Endothelial cell of umbilical vein (primary cell): ENCODE measurements at regions of chr3 and their contacts with region 1.

Region 1: DNA sequence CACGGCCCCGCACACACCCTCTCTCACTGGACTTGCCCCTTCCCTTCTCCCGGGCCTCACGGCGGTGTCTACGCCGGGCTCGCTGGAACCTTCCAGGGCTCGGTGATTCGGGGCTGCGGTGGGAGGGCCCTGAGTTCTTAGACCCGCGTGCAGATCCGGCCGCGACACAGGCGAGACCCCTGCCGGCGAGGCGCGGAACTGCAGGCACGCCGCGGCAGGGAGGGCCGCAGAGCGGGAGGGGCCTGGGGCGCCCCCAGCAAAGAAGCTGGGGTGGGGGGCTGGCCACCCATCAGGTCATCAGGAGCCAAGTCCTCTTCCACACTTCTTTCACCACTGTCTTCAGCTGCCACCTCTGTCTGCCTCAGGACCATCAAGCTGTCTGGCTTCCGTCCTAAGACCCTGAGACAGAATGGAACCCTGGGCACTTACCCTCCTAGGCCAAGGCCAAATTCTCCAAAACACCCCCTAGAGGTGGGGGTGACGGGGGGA is 164.5 kb downstream of the XXYLT1 start:
- DNase-seq: peak; percentile 76
- H3K4me3 ChIP-seq: no peak overlapping the region
- H3K27ac ChIP-seq: peak overlapping the region; percentile 96
- H3K4me1 ChIP-seq: peaks cover 44% of the 10 kb centered on the region
- H3K27me3 ChIP-seq: no peaks in the 10 kb centered on the region
- CTCF ChIP-seq: peak; percentile 97 to 98
- POLR2A ChIP-seq: no peak

Region 2: GRCh38 chr3:194640829-194641228 is 465.6 kb before region 1 on chr3:
- CTCF ChIA-PET with region 1: no interaction called
- POLR2A ChIA-PET with region 1: no interaction called
- dilution Hi-C with region 1: no loop called
- intact Hi-C with region 1: loop called (anchors 1 kb)
- DNase-seq: peak; percentile 79
- H3K4me3 ChIP-seq: peak overlapping the region in 1 of 3 experiments; percentile 14
- H3K27ac ChIP-seq: peak overlapping the region; percentile 91
- H3K4me1 ChIP-seq: peaks cover 35% of the 10 kb centered on the region
- H3K27me3 ChIP-seq: no peaks in the 10 kb centered on the region
- CTCF ChIP-seq: peak; percentile 49 to 61
- POLR2A ChIP-seq: no peak

Region 3: GRCh38 chr3:194691481-194692283 is 414.8 kb before region 1 on chr3:
- CTCF ChIA-PET with region 1: interaction called, 20 read pairs
- POLR2A ChIA-PET with region 1: interaction called, 5 read pairs
- dilution Hi-C with region 1: loop called (anchors 25 kb)
- intact Hi-C with region 1: loop called (anchors 1 kb)
- DNase-seq: peak; percentile 68
- H3K4me3 ChIP-seq: no peak overlapping the region
- H3K27ac ChIP-seq: peak overlapping the region; percentile 39
- H3K4me1 ChIP-seq: peaks cover 19% of the 10 kb centered on the region
- H3K27me3 ChIP-seq: no peaks in the 10 kb centered on the region
- CTCF ChIP-seq: no peak
- POLR2A ChIP-seq: peak; percentile 76

Region 4: DNA sequence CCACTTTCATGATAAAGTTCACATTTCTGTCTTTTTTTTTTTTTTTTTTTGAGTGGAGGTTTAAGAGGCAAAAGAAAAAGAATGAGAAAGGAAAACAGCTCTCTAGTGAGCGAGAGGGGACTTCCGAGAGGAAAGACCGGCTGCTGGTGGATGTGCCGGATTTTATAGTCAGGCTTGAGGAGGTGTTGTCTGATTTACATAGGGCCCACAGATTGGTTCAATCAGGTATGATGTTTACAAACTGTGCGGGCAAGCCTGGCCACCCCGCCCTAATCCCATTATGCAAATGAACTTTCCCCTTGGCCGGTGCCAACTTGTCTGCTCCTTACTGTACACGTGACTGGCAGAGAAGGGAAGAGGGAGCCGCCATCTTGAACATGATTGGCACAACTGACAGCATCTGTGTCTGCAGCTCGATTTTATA is 376.1 kb before region 1 on chr3:
- CTCF ChIA-PET with region 1: no interaction called
- POLR2A ChIA-PET with region 1: no interaction called
- dilution Hi-C with region 1: no loop called
- intact Hi-C with region 1: no loop called
- DNase-seq: peak; percentile 32
- H3K4me3 ChIP-seq: no peak overlapping the region
- H3K27ac ChIP-seq: no peak overlapping the region
- H3K4me1 ChIP-seq: no peaks in the 10 kb centered on the region
- H3K27me3 ChIP-seq: no peaks in the 10 kb centered on the region
- CTCF ChIP-seq: no peak
- POLR2A ChIP-seq: no peak

Region 5: GRCh38 chr3:194871143-194871863 is 235.2 kb before region 1 on chr3:
- CTCF ChIA-PET with region 1: interaction called, 7 read pairs
- POLR2A ChIA-PET with region 1: no interaction called
- dilution Hi-C with region 1: no loop called
- intact Hi-C with region 1: loop called (anchors 1 kb)
- DNase-seq: peak; percentile 71
- H3K4me3 ChIP-seq: no peak overlapping the region
- H3K27ac ChIP-seq: peak overlapping the region; percentile 73
- H3K4me1 ChIP-seq: peaks cover 50% of the 10 kb centered on the region
- H3K27me3 ChIP-seq: no peaks in the 10 kb centered on the region
- CTCF ChIP-seq: no peak
- POLR2A ChIP-seq: no peak

Region 6: DNA sequence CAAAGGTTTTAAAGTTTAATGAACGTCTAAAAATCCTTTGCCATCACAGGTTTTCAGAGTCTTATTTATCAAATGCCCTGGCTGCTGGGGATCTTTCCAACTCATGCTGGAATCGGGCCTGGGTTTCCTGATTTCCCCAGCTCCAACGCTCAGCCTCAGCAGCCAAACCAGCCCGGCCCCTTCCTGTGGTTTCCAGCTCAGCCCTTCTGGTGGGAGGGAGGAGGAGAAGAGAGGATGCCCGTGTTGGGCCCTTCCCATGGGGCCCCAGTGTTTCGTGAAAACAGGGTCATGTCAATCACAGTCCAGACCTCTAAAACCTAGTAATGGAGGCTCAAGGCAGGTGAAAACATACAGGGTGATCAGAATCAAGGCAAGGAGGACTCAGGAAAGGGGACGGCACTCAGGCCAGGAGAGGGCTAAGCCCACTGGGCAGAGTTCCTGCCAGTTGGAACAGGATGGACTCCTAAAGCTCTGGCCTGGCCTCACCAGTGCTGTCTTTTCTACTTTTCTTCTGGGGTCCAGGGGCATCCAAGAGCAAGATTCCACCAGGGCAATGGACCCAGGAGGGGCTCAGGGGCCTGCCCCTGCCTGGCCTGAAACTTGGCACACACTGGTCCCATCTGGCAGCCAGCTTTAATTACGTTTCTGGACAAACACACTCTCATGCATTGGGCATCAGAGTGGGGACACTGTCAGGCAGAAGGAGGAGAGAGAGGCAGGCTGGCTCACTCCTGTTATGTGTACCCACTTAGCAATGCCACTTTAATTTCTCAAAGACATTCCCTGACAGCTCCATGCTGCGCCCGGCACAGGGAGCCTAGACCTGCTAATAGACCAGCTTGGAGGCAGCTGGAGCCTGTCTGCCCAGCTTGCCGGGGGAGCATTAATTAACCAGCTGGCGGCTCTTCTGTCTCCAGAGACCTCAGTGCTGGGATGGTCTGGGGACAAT is 226.2 kb before region 1 on chr3:
- CTCF ChIA-PET with region 1: interaction called, 4 read pairs
- POLR2A ChIA-PET with region 1: no interaction called
- dilution Hi-C with region 1: no loop called
- intact Hi-C with region 1: loop called (anchors 5 kb)
- DNase-seq: peak; percentile 80
- H3K4me3 ChIP-seq: no peak overlapping the region
- H3K27ac ChIP-seq: peak overlapping the region; percentile 54
- H3K4me1 ChIP-seq: peaks cover 28% of the 10 kb centered on the region
- H3K27me3 ChIP-seq: no peaks in the 10 kb centered on the region
- CTCF ChIP-seq: no peak
- POLR2A ChIP-seq: no peak

Region 7: GRCh38 chr3:195001961-195002861 is 104.3 kb before region 1 on chr3:
- CTCF ChIA-PET with region 1: interaction called, 10 read pairs
- POLR2A ChIA-PET with region 1: no interaction called
- dilution Hi-C with region 1: no loop called
- intact Hi-C with region 1: loop called (anchors 1 kb)
- DNase-seq: peak; percentile 80
- H3K4me3 ChIP-seq: no peak overlapping the region
- H3K27ac ChIP-seq: no peak overlapping the region
- H3K4me1 ChIP-seq: peaks cover 5% of the 10 kb centered on the region
- H3K27me3 ChIP-seq: no peaks in the 10 kb centered on the region
- CTCF ChIP-seq: peak; percentile 67 to 83
- POLR2A ChIP-seq: no peak